CD8-positive, alpha-beta memory T cell (primary cell): ENCODE measurements at regions of chr19 and their contacts with region 1.

Region 1: GRCh38 chr19:9934132-9934950 is 2.0 kb downstream of the OLFM2 start:
- DNase-seq: peak; percentile 72 to 84 (median 78)
- H3K4me3 ChIP-seq: no peak overlapping the region
- H3K4me3 Mint-ChIP-seq: peak overlapping the region in 3 of 7 donors; percentile 25 to 32 (median 26)
- H3K27ac ChIP-seq: no peak overlapping the region
- H3K27ac Mint-ChIP-seq: peak overlapping the region in 2 of 8 donors; percentile 40 to 46
- H3K4me1 ChIP-seq: peaks cover 23% of the 10 kb centered on the region
- H3K4me1 Mint-ChIP-seq: peaks cover 24 to 34% (median 32%) of the 10 kb centered on the region in 3 donors
- H3K27me3 ChIP-seq: peaks cover 33% of the 10 kb centered on the region
- H3K27me3 Mint-ChIP-seq: peaks cover 37 to 58% of the 10 kb centered on the region in 2 donors

Region 2: GRCh38 chr19:10000171-10000826 is 66.0 kb after region 1 on chr19:
- CTCF ChIA-PET with region 1: interaction called, 14 read pairs
- POLR2A ChIA-PET with region 1: no interaction called
- DNase-seq: peak; percentile 45 to 67 (median 56)
- H3K4me3 ChIP-seq: no peak overlapping the region
- H3K4me3 Mint-ChIP-seq: no peak overlapping the region
- H3K27ac ChIP-seq: no peak overlapping the region
- H3K27ac Mint-ChIP-seq: peak overlapping the region in 4 of 8 donors; percentile 4 to 82 (median 44)
- H3K4me1 ChIP-seq: no peaks in the 10 kb centered on the region
- H3K4me1 Mint-ChIP-seq: peaks cover 8 to 35% (median 11%) of the 10 kb centered on the region in 3 donors
- H3K27me3 ChIP-seq: no peaks in the 10 kb centered on the region
- H3K27me3 Mint-ChIP-seq: peaks cover 28 to 62% of the 10 kb centered on the region in 2 donors

Region 3: DNA sequence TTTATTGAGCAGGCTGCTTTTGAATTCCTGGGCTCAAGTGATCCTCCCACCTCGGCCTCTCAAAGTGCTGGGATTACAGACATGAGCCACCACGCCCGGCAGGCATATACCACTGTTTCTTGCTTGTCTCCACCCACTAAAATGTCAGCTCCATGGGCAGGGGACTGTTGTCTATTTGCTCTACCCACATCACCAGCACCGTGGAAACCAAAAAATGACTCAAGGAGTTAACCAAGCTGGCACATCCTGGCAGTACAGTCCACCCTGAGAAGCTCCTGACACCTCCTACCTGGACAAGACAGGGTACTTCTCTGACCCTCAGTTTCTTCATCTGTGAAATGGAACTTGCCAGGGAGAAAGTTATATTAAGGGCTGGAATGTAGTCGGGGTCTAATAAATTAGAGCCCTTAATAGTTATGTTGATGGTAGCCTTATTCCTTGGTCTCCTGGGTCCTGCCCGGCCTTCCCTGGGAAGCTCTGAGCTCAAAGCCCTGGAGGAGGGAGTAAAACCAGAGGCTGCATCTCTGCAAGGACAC is 92.9 kb after region 1 on chr19:
- CTCF ChIA-PET with region 1: interaction called, 16 read pairs
- POLR2A ChIA-PET with region 1: no interaction called
- DNase-seq: no peak
- H3K4me3 ChIP-seq: no peak overlapping the region
- H3K4me3 Mint-ChIP-seq: peak overlapping the region in 1 of 7 donors; percentile 72
- H3K27ac ChIP-seq: no peak overlapping the region
- H3K27ac Mint-ChIP-seq: no peak overlapping the region
- H3K4me1 ChIP-seq: peaks cover 7% of the 10 kb centered on the region
- H3K4me1 Mint-ChIP-seq: peaks cover 0 to 5% (median 5%) of the 10 kb centered on the region in 3 donors
- H3K27me3 ChIP-seq: no peaks in the 10 kb centered on the region
- H3K27me3 Mint-ChIP-seq: peaks cover 4 to 19% of the 10 kb centered on the region in 2 donors